CD8-positive, alpha-beta memory T cell (primary cell): ENCODE measurements at regions of chr16 and their contacts with region 1.

Region 1: GRCh38 chr16:17177242-17177958 is 293.4 kb downstream of the XYLT1 start:
- DNase-seq: no peak
- H3K4me3 ChIP-seq: no peak overlapping the region
- H3K4me3 Mint-ChIP-seq: no peak overlapping the region
- H3K27ac ChIP-seq: no peak overlapping the region
- H3K27ac Mint-ChIP-seq: peak overlapping the region in 3 of 8 donors; percentile 6 to 79 (median 13)
- H3K4me1 ChIP-seq: no peaks in the 10 kb centered on the region
- H3K4me1 Mint-ChIP-seq: peaks cover 12 to 23% (median 17%) of the 10 kb centered on the region in 3 donors
- H3K27me3 ChIP-seq: no peaks in the 10 kb centered on the region
- H3K27me3 Mint-ChIP-seq: no peaks in the 10 kb centered on the region

Region 2: GRCh38 chr16:16960785-16961184 is 216.6 kb before region 1 on chr16:
- CTCF ChIA-PET with region 1: no interaction called
- POLR2A ChIA-PET with region 1: no interaction called
- DNase-seq: no peak
- H3K4me3 ChIP-seq: no peak overlapping the region
- H3K4me3 Mint-ChIP-seq: no peak overlapping the region
- H3K27ac ChIP-seq: no peak overlapping the region
- H3K27ac Mint-ChIP-seq: no peak overlapping the region
- H3K4me1 ChIP-seq: no peaks in the 10 kb centered on the region
- H3K4me1 Mint-ChIP-seq: peaks cover 0 to 5% (median 0%) of the 10 kb centered on the region in 3 donors
- H3K27me3 ChIP-seq: no peaks in the 10 kb centered on the region
- H3K27me3 Mint-ChIP-seq: peaks cover 4 to 20% of the 10 kb centered on the region in 2 donors

Region 3: GRCh38 chr16:17205279-17206211 is 28.1 kb after region 1 on chr16:
- CTCF ChIA-PET with region 1: no interaction called
- POLR2A ChIA-PET with region 1: no interaction called
- DNase-seq: no peak
- H3K4me3 ChIP-seq: no peak overlapping the region
- H3K4me3 Mint-ChIP-seq: no peak overlapping the region
- H3K27ac ChIP-seq: no peak overlapping the region
- H3K27ac Mint-ChIP-seq: peak overlapping the region in 1 of 8 donors; percentile 41
- H3K4me1 ChIP-seq: no peaks in the 10 kb centered on the region
- H3K4me1 Mint-ChIP-seq: peaks cover 2 to 6% (median 4%) of the 10 kb centered on the region in 3 donors
- H3K27me3 ChIP-seq: no peaks in the 10 kb centered on the region
- H3K27me3 Mint-ChIP-seq: no peaks in the 10 kb centered on the region

Region 4: GRCh38 chr16:17296431-17296830 is 119.0 kb after region 1 on chr16:
- CTCF ChIA-PET with region 1: no interaction called
- POLR2A ChIA-PET with region 1: interaction called, 11 read pairs
- DNase-seq: no peak
- H3K4me3 ChIP-seq: no peak overlapping the region
- H3K4me3 Mint-ChIP-seq: peak overlapping the region in 1 of 7 donors; percentile 62
- H3K27ac ChIP-seq: no peak overlapping the region
- H3K27ac Mint-ChIP-seq: peak overlapping the region in 1 of 8 donors; percentile 19
- H3K4me1 ChIP-seq: no peaks in the 10 kb centered on the region
- H3K4me1 Mint-ChIP-seq: peaks cover 4 to 13% (median 6%) of the 10 kb centered on the region in 3 donors
- H3K27me3 ChIP-seq: no peaks in the 10 kb centered on the region
- H3K27me3 Mint-ChIP-seq: peaks cover 0 to 2% of the 10 kb centered on the region in 2 donors